MCF 10A (cell line): ENCODE measurements at regions of chr5 and their contacts with region 1.

Region 1: GRCh38 chr5:132466433-132467286 is 23.9 kb downstream of the IRF1 start:
- DNase-seq: no peak
- H3K4me3 Mint-ChIP-seq: no peak overlapping the region
- H3K27ac Mint-ChIP-seq: no peak overlapping the region
- H3K4me1 Mint-ChIP-seq: peaks cover 18% of the 10 kb centered on the region
- H3K27me3 Mint-ChIP-seq: no peaks in the 10 kb centered on the region
- CTCF ChIP-seq: no peak

Region 2: GRCh38 chr5:132419502-132420468 is 46.9 kb before region 1 on chr5:
- CTCF ChIA-PET with region 1: interaction called, 11 read pairs
- POLR2A ChIA-PET with region 1: interaction called, 6 read pairs
- intact Hi-C with region 1: loop called (anchors 1 kb)
- DNase-seq: peak; percentile 87
- H3K4me3 Mint-ChIP-seq: no peak overlapping the region
- H3K27ac Mint-ChIP-seq: peak overlapping the region; percentile 17
- H3K4me1 Mint-ChIP-seq: peaks cover 35% of the 10 kb centered on the region
- H3K27me3 Mint-ChIP-seq: no peaks in the 10 kb centered on the region
- CTCF ChIP-seq: peak; percentile 97

Region 3: DNA sequence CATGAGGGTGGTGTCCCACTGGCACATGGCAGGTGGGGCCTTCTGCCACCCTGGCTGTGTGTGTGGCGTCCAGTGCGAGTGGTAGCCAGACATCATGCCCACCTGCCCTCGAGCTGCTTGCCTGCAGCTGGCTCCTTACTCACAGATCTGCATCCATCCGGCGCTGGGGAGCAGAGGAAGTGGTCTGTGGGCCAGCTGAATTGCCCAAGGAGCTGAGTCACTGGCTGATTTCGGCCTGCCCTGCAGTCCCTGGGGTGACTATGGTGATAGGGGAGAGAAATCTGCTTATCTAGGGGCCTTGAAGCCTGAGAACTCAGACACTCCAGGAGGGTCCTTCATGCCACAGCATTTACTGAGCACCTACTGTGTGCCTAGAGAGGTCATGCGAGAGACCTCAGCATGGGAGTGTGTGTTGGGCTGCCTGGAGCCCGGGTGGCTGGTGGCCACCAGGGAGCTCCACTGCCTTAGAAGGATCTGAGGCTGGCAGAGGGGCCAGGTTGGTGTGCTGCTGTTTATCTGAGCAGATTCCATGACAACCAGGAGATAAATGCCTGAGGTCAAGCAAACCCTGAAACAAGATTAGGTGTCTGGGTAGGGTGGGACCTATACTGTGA is 40.0 kb before region 1 on chr5:
- CTCF ChIA-PET with region 1: interaction called, 13 read pairs
- POLR2A ChIA-PET with region 1: interaction called, 3 read pairs
- intact Hi-C with region 1: no loop called
- DNase-seq: peak; percentile 96
- H3K4me3 Mint-ChIP-seq: no peak overlapping the region
- H3K27ac Mint-ChIP-seq: peak overlapping the region; percentile 68
- H3K4me1 Mint-ChIP-seq: peaks cover 47% of the 10 kb centered on the region
- H3K27me3 Mint-ChIP-seq: no peaks in the 10 kb centered on the region
- CTCF ChIP-seq: peak; percentile 22

Region 4: GRCh38 chr5:132446669-132447068 is 20.0 kb before region 1 on chr5:
- CTCF ChIA-PET with region 1: interaction called, 17 read pairs
- POLR2A ChIA-PET with region 1: interaction called, 4 read pairs
- intact Hi-C with region 1: no loop called
- DNase-seq: peak; percentile 96
- H3K4me3 Mint-ChIP-seq: no peak overlapping the region
- H3K27ac Mint-ChIP-seq: peak overlapping the region; percentile 34
- H3K4me1 Mint-ChIP-seq: peaks cover 51% of the 10 kb centered on the region
- H3K27me3 Mint-ChIP-seq: no peaks in the 10 kb centered on the region
- CTCF ChIP-seq: no peak